Activated T-helper 2 cell treated with anti-CD3 and anti-CD28 coated beads, Interferon-gamma antibody, Interleukin-2, Interleukin-4, amounts not matched to agents 10 μg/mL and 5 μg/mL and 100 μg/mL, durations not matched to agents 14 hours and 24 hours and 36 hours (primary cell): ENCODE measurements at regions of chr2 and their contacts with region 1.

Region 1: GRCh38 chr2:135637456-135638087 is 104.1 kb upstream of the UBXN4 start:
- DNase-seq: no peak
- H3K4me3 Mint-ChIP-seq: no peak overlapping the region
- H3K27ac Mint-ChIP-seq: peak overlapping the region; percentile 36
- H3K4me1 Mint-ChIP-seq: peaks cover 12% of the 10 kb centered on the region
- H3K27me3 Mint-ChIP-seq: no peaks in the 10 kb centered on the region

Region 2: GRCh38 chr2:135279228-135279627 is 358.3 kb before region 1 on chr2:
- intact Hi-C with region 1: no loop called
- DNase-seq: no peak
- H3K4me3 Mint-ChIP-seq: no peak overlapping the region
- H3K27ac Mint-ChIP-seq: no peak overlapping the region
- H3K4me1 Mint-ChIP-seq: no peaks in the 10 kb centered on the region
- H3K27me3 Mint-ChIP-seq: peaks cover 3% of the 10 kb centered on the region

Region 3: GRCh38 chr2:135620198-135620597 is 17.4 kb before region 1 on chr2:
- intact Hi-C with region 1: loop called (anchors 2 kb)
- DNase-seq: no peak
- H3K4me3 Mint-ChIP-seq: no peak overlapping the region
- H3K27ac Mint-ChIP-seq: no peak overlapping the region
- H3K4me1 Mint-ChIP-seq: peaks cover 3% of the 10 kb centered on the region
- H3K27me3 Mint-ChIP-seq: no peaks in the 10 kb centered on the region